Activated CD4-positive, alpha-beta T cell treated with anti-CD3 and anti-CD28 coated beads, Interleukin-2, amount 10 ng/mL, durations not matched to agents 24 days and 14 days (primary cell): ENCODE measurements at regions of chr14 and their contacts with region 1.

Region 1: DNA sequence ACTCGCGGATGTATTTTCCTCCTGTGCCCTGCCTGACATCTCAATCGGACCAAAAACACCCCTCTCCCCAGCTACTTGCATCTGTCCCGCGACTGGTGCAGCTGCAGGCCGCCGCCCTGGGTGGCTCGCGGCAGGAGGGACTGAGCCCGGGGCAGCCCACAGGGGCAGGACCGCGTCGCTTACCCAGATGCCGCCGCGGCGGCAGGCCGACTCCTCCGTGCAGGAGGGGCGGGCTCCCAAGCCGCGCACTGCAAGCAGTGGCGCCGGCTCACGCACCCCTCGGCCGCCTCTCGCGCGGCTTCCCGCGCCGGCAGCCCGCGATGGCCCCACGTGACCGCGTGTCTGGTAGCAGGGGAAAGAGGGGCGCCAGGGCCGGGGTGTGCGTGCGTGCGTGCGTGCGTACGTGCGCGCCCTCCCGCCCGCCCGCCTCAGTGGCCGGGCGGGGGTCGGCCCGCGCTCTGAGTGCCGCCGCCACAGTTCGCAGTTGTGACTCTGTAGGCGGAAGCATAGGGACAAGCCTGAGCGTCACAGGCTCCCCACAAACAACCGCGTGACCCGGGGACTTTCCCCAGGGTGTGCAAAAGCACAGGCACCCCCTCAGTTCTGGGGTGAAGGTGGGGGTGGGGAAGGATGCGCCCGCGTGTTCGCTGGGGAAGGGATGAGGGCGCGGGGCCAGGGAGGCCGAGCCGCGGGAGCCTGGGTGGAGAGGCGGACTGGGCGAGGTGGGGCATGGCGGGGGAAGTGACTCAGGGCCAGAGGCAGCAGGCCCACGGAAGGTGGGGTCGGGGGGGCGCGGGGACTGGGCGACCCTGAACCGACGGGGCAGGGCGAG is at the start of gene ZBTB25:
- DNase-seq: peak; percentile 99
- H3K4me3 Mint-ChIP-seq: peak within 1 kb of the TSS; percentile 94
- H3K27ac Mint-ChIP-seq: peak within 1 kb of the TSS; percentile 100
- H3K4me1 Mint-ChIP-seq: peaks cover 56% of the 10 kb centered on the region
- H3K27me3 Mint-ChIP-seq: peaks cover 1% of the 10 kb centered on the region
- total RNA-seq, gene ZBTB25: 21.8 and 22.2 TPM in 2 replicates

Region 2: GRCh38 chr14:64387694-64388532 is 115.8 kb before region 1 on chr14 and contains the start of gene MTHFD1:
- intact Hi-C with region 1: loop called (anchors 1 kb)
- DNase-seq: peak; percentile 99
- H3K4me3 Mint-ChIP-seq: peak within 1 kb of the TSS; percentile 99
- H3K27ac Mint-ChIP-seq: peak within 1 kb of the TSS; percentile 94
- H3K4me1 Mint-ChIP-seq: peaks cover 40% of the 10 kb centered on the region
- H3K27me3 Mint-ChIP-seq: peaks cover 2% of the 10 kb centered on the region
- total RNA-seq, gene MTHFD1: 246 and 249 TPM in 2 replicates

Region 3: GRCh38 chr14:64465191-64465822 is 38.4 kb before region 1 on chr14 and contains the start of gene AKAP5:
- intact Hi-C with region 1: loop called (anchors 5 kb)
- DNase-seq: peak; percentile 90
- H3K4me3 Mint-ChIP-seq: peak within 1 kb of the TSS; percentile 86
- H3K27ac Mint-ChIP-seq: peak within 1 kb of the TSS; percentile 79
- H3K4me1 Mint-ChIP-seq: peaks cover 33% of the 10 kb centered on the region
- H3K27me3 Mint-ChIP-seq: peaks cover 5% of the 10 kb centered on the region
- total RNA-seq, gene AKAP5: 0.90 and 0.98 TPM in 2 replicates

Region 4: DNA sequence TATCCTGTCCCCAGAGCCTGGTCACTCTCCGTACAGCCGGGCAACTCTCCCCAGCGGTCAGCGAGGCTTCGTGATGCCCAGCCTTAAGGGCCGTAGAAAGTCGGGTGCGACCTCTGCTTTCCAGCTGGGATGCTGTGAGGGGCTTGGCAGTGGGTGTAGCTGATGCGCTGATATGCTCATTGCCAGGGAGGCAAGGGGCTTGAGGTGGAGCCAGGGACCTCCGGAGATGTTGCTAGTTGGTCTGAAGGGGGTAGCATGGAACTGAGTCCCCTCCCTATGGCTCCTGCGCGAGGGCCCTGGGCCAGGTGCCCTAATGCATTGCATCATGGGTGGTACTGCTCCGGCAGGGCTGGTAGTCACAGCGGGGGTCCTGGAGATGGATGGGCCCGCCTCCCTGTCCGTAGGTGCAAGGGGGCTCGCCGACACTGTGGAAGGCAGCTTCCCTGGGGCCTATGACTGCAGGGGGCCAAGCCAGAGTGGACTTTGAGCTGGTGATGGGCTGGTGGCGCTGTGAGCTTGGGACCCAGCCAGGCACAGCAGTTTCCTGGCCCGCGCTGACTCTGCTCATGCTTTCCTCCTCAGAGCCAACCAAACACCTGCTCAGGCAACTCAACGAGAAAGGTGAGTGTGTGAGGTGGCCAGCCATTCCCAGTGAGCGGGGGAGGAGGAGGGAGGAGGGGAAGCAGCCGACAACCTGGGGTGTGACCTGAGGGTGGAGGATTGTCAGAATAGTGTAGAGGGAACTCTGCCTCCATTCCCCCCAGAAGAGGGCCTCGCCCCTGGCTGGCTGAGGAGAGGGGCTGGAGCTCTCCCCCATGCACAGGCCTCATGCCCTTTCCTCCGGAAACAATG is 232.8 kb after region 1 on chr14:
- intact Hi-C with region 1: no loop called
- DNase-seq: no peak
- H3K4me3 Mint-ChIP-seq: no peak overlapping the region
- H3K27ac Mint-ChIP-seq: no peak overlapping the region
- H3K4me1 Mint-ChIP-seq: peaks cover 12% of the 10 kb centered on the region
- H3K27me3 Mint-ChIP-seq: no peaks in the 10 kb centered on the region